ENCODE measurements at regions of chr11 and their contacts with region 1.

Region 1: GRCh38 chr11:86978756-86979608 is 23.8 kb upstream of the FZD4 start:
- DNase-seq: peak in 3 of 9 donors; percentile 22 to 41 (median 27)
- ATAC-seq: peak; percentile 64
- H3K4me3 ChIP-seq: no peak overlapping the region
- H3K4me3 Mint-ChIP-seq: no peak overlapping the region
- H3K27ac ChIP-seq: no peak overlapping the region
- H3K27ac Mint-ChIP-seq: no peak overlapping the region
- H3K4me1 ChIP-seq: no peaks in the 10 kb centered on the region
- H3K4me1 Mint-ChIP-seq: no peaks in the 10 kb centered on the region
- H3K27me3 ChIP-seq: no peaks in the 10 kb centered on the region
- H3K27me3 Mint-ChIP-seq: peaks cover 0 to 7% (median 3%) of the 10 kb centered on the region in 5 donors

Region 2: GRCh38 chr11:86931548-86932258 is 47.3 kb before region 1 on chr11:
- CTCF ChIA-PET with region 1: no interaction called
- POLR2A ChIA-PET with region 1: no interaction called
- intact Hi-C with region 1: no loop called
- DNase-seq: no peak
- ATAC-seq: no peak
- H3K4me3 ChIP-seq: no peak overlapping the region
- H3K4me3 Mint-ChIP-seq: no peak overlapping the region
- H3K27ac ChIP-seq: no peak overlapping the region
- H3K27ac Mint-ChIP-seq: no peak overlapping the region
- H3K4me1 ChIP-seq: no peaks in the 10 kb centered on the region
- H3K4me1 Mint-ChIP-seq: no peaks in the 10 kb centered on the region
- H3K27me3 ChIP-seq: no peaks in the 10 kb centered on the region
- H3K27me3 Mint-ChIP-seq: peaks cover 0 to 5% (median 0%) of the 10 kb centered on the region in 5 donors

Region 3: GRCh38 chr11:87039371-87039770 is 60.4 kb after region 1 on chr11:
- CTCF ChIA-PET with region 1: no interaction called
- POLR2A ChIA-PET with region 1: no interaction called
- intact Hi-C with region 1: no loop called
- DNase-seq: no peak
- ATAC-seq: no peak
- H3K4me3 ChIP-seq: no peak overlapping the region
- H3K4me3 Mint-ChIP-seq: peak overlapping the region; percentile 92 to 99 (median 97)
- H3K27ac ChIP-seq: no peak overlapping the region
- H3K27ac Mint-ChIP-seq: peak overlapping the region in 3 of 9 donors; percentile 9 to 85 (median 77)
- H3K4me1 ChIP-seq: peaks cover 11 to 15% of the 10 kb centered on the region in 2 donors
- H3K4me1 Mint-ChIP-seq: peaks cover 37 to 68% (median 58%) of the 10 kb centered on the region in 7 donors
- H3K27me3 ChIP-seq: no peaks in the 10 kb centered on the region
- H3K27me3 Mint-ChIP-seq: peaks cover 0 to 6% (median 0%) of the 10 kb centered on the region in 5 donors

Region 4: GRCh38 chr11:87193756-87194470 is 214.9 kb after region 1 on chr11:
- CTCF ChIA-PET with region 1: no interaction called
- POLR2A ChIA-PET with region 1: no interaction called
- intact Hi-C with region 1: no loop called
- DNase-seq: no peak
- ATAC-seq: no peak
- H3K4me3 ChIP-seq: no peak overlapping the region
- H3K4me3 Mint-ChIP-seq: no peak overlapping the region
- H3K27ac ChIP-seq: no peak overlapping the region
- H3K27ac Mint-ChIP-seq: no peak overlapping the region
- H3K4me1 ChIP-seq: no peaks in the 10 kb centered on the region
- H3K4me1 Mint-ChIP-seq: peaks cover 0 to 9% (median 4%) of the 10 kb centered on the region in 7 donors
- H3K27me3 ChIP-seq: no peaks in the 10 kb centered on the region
- H3K27me3 Mint-ChIP-seq: no peaks in the 10 kb centered on the region

Region 5: DNA sequence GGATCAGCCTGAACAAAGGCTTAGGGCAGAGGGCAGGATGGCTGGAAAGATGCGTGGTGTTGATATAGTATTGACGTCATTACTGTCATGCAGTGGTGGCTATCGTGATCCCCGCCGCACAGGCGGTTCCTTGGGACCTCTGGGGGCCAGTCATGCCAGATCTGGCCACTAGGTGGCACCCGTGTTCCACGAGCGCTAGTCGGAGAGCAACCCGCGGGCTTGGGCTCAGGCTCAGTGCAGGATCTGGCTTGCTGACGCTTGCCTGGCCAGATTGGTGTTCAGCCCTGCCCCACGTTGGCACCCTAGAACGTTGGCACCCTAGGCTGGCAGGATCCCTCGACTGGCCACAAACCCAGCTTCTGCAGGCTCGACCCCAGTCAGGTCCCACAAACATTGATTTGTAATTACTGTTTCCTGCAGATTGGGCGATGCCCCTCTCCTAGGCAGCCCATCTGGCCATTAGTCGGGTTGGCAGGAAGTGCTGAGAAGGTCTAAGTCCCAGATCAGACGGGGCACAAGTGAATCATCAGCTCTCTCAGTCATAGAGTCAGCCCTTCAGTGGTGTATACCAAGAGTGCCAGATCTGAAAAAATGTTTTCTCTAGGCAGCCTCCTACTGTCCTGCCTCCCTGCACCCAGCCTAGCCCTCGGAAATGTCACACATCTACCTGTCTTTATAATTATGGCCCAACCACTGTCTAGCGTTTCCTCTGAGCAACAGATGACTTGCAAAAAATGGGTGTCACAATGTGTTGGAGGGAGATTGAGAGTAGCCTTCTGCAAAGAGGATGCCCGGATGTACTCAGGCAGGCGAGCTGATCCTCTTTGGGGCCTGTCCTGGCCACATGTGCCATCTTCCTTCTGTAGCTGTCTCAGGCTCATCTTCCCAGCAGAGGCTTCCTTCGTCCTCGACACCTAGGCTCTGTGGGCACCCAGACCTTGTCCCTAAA is 374.1 kb after region 1 on chr11:
- CTCF ChIA-PET with region 1: no interaction called
- POLR2A ChIA-PET with region 1: no interaction called
- intact Hi-C with region 1: loop called in 1 of 2 experiments (anchors 1 kb)
- DNase-seq: peak; percentile 58 to 87 (median 74)
- ATAC-seq: peak; percentile 93
- H3K4me3 ChIP-seq: no peak overlapping the region
- H3K4me3 Mint-ChIP-seq: peak overlapping the region in 3 of 10 donors; percentile 12 to 26 (median 21)
- H3K27ac ChIP-seq: no peak overlapping the region
- H3K27ac Mint-ChIP-seq: peak overlapping the region in 1 of 9 donors; percentile 52
- H3K4me1 ChIP-seq: peaks cover 0 to 6% of the 10 kb centered on the region in 2 donors
- H3K4me1 Mint-ChIP-seq: peaks cover 0 to 13% (median 10%) of the 10 kb centered on the region in 7 donors
- H3K27me3 ChIP-seq: peaks cover 0 to 5% of the 10 kb centered on the region in 2 donors
- H3K27me3 Mint-ChIP-seq: peaks cover 5 to 15% (median 9%) of the 10 kb centered on the region in 5 donors